ENCODE measurements at regions of chr1 and their contacts with region 1.

Region 1: GRCh38 chr1:203267347-203267846 is 37.9 kb upstream of the BTG2 start:
- DNase-seq: peak; percentile 29
- H3K4me3 ChIP-seq: peak overlapping the region; percentile 72
- CTCF ChIP-seq: peak; percentile 82

Region 2: DNA sequence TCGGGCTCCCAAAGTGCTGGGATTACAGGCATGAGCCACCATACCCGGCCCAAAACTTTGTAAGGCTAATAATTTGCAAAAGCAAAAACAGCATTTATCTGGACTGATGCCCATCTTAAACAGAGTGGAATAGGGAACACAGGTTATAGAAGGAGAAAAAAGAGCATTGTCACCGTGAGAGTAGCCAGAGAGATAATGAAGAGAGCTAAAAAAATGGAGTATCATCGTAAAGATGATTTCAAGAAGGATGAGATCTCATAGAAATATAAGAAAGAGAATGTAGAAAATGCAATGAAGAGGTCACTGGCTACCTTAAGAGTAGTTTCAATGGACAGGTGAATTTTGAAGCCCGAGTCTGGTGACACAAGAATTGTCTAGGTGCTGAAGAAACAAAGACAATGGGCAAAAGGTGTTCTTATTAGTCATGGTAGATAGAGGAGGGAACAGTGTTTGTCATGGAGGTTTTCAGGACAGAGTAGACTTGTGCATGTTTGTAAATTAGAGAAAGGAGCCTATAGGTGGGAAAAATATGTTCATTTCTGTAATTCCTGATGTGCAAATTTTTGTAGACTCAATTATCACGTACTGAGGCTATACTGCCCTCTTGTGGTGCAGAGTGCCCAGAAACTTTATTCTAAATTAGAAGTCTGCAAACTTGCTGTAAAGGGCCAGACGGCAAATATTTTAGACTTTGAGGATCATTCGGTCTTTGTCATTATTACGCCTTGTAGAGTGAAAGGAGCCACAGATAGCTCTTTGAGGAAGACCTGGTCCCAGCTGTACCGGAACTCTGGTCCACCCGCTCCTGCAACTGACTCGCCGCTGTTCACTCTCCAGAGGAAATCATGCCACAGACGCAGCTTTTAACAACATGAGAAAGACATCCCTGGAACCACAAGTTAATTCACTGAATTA is 268.3 kb before region 1 on chr1:
- CTCF ChIA-PET with region 1: interaction called, 47 read pairs
- POLR2A ChIA-PET with region 1: no interaction called
- DNase-seq: peak; percentile 5
- H3K4me3 ChIP-seq: peak overlapping the region; percentile 36
- CTCF ChIP-seq: peak; percentile 49

Region 3: DNA sequence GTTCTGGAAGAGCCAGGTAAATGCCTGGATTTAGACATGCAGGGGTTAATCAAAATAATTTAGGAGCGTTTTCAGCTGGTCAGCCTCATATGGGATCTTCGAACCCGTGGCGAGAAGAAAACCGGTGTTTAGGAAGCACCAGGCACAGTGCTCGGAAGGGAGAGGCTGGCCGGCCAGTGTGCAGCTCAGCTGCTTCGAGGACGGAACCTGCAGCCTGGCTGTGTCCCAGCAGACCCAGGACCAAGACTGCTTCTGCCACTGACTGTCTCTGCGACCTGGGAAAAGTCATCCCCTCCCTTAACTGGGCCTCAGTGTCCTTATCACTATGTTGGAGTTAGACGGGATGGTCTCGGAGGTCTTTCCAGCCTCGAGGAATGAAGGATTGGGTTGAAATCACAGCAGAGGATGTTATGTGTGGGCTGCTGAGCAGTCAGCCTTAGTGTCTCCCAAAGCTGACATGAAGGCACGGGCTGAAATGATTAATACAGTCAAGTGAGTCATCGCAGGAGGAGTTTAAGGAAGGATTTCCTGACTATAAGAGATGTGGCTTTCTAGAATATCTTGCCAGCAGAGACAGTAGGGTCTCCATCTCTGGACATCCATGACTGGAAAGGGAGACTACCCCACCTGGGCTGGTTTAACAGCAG is 220.3 kb before region 1 on chr1:
- CTCF ChIA-PET with region 1: interaction called, 392 read pairs
- POLR2A ChIA-PET with region 1: no interaction called
- DNase-seq: peak; percentile 21
- H3K4me3 ChIP-seq: no peak overlapping the region
- CTCF ChIP-seq: no peak

Region 4: GRCh38 chr1:203076031-203076511 is 191.3 kb before region 1 on chr1:
- CTCF ChIA-PET with region 1: interaction called, 24 read pairs
- POLR2A ChIA-PET with region 1: no interaction called
- DNase-seq: no peak
- H3K4me3 ChIP-seq: no peak overlapping the region
- CTCF ChIP-seq: no peak

Region 5: DNA sequence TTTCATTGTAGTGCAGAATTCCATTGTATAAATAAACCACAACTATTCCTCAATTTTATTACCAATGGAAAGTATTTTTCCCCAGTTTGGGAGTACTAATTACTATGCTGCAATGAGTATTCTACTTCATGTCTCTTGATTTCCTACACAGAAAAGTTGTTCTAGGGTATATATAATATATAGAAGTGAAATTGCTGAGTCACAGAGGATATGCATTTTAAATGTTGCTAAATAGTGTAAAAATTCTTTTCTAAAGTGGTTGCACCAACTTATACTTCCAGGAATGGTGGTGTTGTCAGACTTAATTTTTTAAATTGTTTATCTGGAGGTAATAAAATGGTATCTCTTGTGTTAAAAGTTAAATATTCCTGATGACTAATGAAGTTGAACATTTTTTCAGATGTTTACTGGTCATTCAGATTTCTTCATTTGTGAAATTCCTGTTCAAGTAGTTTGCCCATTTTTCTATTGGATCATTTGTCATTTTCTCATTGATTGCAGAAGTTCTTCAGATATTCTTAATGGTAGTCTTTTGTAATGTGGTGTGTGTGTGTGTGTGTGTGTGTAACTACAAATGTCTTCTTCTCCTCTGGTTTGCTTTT is 162.5 kb before region 1 on chr1:
- CTCF ChIA-PET with region 1: no interaction called
- POLR2A ChIA-PET with region 1: no interaction called
- DNase-seq: no peak
- H3K4me3 ChIP-seq: no peak overlapping the region
- CTCF ChIP-seq: no peak

Region 6: GRCh38 chr1:203210990-203211389 is 56.4 kb before region 1 on chr1:
- CTCF ChIA-PET with region 1: interaction called, 21 read pairs
- POLR2A ChIA-PET with region 1: no interaction called
- DNase-seq: no peak
- H3K4me3 ChIP-seq: no peak overlapping the region
- CTCF ChIP-seq: no peak

Region 7: GRCh38 chr1:203252678-203253077 is 14.7 kb before region 1 on chr1:
- CTCF ChIA-PET with region 1: interaction called, 62 read pairs
- POLR2A ChIA-PET with region 1: no interaction called
- DNase-seq: no peak
- H3K4me3 ChIP-seq: no peak overlapping the region
- CTCF ChIP-seq: no peak

Region 8: GRCh38 chr1:203629507-203630082 is 362.2 kb after region 1 on chr1:
- CTCF ChIA-PET with region 1: no interaction called
- POLR2A ChIA-PET with region 1: no interaction called
- DNase-seq: no peak
- H3K4me3 ChIP-seq: peak overlapping the region; percentile 85
- CTCF ChIP-seq: no peak

Region 9: GRCh38 chr1:203702130-203702577 is 434.8 kb after region 1 on chr1:
- CTCF ChIA-PET with region 1: interaction called, 10 read pairs
- POLR2A ChIA-PET with region 1: no interaction called
- DNase-seq: no peak
- H3K4me3 ChIP-seq: no peak overlapping the region
- CTCF ChIP-seq: peak; percentile 68